ENCODE measurements at regions of chr16 and their contacts with region 1.

Region 1: GRCh38 chr16:21708533-21709115 is 44.9 kb downstream of the OTOA start:
- DNase-seq: peak in 1 of 2 experiments; percentile 90
- H3K4me3 ChIP-seq: no peak overlapping the region
- H3K27ac ChIP-seq: no peak overlapping the region
- H3K4me1 ChIP-seq: no peaks in the 10 kb centered on the region
- H3K27me3 ChIP-seq: no peaks in the 10 kb centered on the region
- CTCF ChIP-seq: peak in 2 of 3 experiments; percentile 79 to 80; a peak in 3 of 4 replicates
- EP300 ChIP-seq: no peak
- POLR2A ChIP-seq: no peak
- RAD21 ChIP-seq: peak; percentile 86 to 88

Region 2: DNA sequence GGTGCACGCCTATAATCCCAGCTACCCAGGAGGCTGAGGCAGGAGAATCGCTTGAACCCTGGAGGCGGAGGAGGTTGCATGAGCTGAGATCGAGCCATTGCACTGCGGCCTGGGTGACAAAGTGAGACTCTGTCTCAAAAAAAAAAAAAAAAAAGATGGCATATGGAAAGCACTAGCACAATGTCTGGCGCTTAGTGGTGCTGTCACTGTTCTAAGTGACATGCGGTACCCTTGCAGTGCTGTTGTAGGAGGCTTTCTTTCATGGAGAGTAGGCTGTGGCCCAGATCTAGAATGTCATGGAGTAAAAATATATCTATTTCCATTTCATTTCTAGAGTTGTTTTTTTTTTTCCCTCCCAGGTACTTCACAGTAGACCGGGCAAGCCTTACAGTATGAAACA is 123.8 kb before region 1 on chr16:
- CTCF ChIA-PET with region 1: interaction called, 14 read pairs
- POLR2A ChIA-PET with region 1: no interaction called
- DNase-seq: no peak
- H3K4me3 ChIP-seq: no peak overlapping the region
- H3K27ac ChIP-seq: no peak overlapping the region
- H3K4me1 ChIP-seq: no peaks in the 10 kb centered on the region
- H3K27me3 ChIP-seq: no peaks in the 10 kb centered on the region
- CTCF ChIP-seq: no peak
- EP300 ChIP-seq: no peak
- POLR2A ChIP-seq: no peak
- RAD21 ChIP-seq: no peak

Region 3: GRCh38 chr16:21656795-21657768 is 51.5 kb before region 1 on chr16:
- CTCF ChIA-PET with region 1: interaction called, 67 read pairs
- POLR2A ChIA-PET with region 1: no interaction called
- DNase-seq: no peak
- H3K4me3 ChIP-seq: no peak overlapping the region
- H3K27ac ChIP-seq: no peak overlapping the region
- H3K4me1 ChIP-seq: no peaks in the 10 kb centered on the region
- H3K27me3 ChIP-seq: no peaks in the 10 kb centered on the region
- CTCF ChIP-seq: peak in 2 of 3 experiments; percentile 71 to 74; a peak in 3 of 4 replicates
- EP300 ChIP-seq: no peak
- POLR2A ChIP-seq: no peak
- RAD21 ChIP-seq: peak; percentile 80 to 82

Region 4: GRCh38 chr16:21684199-21684598 is 24.4 kb before region 1 on chr16:
- CTCF ChIA-PET with region 1: interaction called, 16 read pairs
- POLR2A ChIA-PET with region 1: interaction called, 4 read pairs
- DNase-seq: peak in 1 of 2 experiments; percentile 82
- H3K4me3 ChIP-seq: no peak overlapping the region
- H3K27ac ChIP-seq: no peak overlapping the region
- H3K4me1 ChIP-seq: no peaks in the 10 kb centered on the region
- H3K27me3 ChIP-seq: no peaks in the 10 kb centered on the region
- CTCF ChIP-seq: peak; percentile 72 to 85 (median 75)
- EP300 ChIP-seq: no peak
- POLR2A ChIP-seq: no peak
- RAD21 ChIP-seq: peak; percentile 33 to 59; a peak in 3 of 4 replicates

Region 5: DNA sequence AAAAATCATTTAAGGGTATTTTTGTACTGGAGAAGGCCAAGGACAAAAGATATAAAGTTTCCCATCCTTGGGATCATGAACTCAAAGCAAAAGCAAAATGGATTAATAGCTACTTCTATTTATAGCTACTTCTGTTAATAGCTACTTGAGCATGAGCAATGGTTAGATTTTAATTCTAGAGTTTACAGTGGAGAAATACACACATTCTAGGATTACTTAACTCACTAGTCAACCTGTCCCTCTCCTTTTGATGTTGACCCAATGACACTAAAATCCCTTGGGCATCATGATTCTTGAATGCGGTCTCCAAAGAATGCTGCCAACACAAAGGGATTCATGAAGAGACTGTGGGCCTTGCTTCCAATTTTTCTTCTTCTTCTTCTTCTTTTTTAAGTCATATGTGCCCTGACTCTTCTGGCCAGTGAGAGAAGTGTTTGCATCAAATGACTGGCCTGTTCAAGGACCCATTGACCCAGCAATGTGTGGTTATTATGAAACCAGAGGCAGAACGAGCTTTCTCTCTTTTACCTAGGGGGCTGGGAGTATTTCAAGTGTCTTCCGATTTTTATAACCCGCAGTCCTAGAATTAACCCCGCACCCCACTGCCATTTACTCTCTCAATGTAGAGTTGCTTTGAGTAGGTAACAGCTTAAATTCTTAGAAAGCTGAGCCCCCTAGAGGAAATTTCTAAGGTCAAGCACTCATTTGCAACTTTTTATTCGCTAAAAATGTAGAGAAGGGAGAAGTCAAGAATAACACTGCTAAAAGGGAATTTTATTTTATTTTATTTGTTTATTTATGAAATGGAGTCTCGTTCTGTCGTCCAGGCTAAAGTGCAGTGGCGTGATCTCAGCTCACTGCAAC is 10.2 kb before region 1 on chr16:
- CTCF ChIA-PET with region 1: interaction called, 14 read pairs
- POLR2A ChIA-PET with region 1: no interaction called
- DNase-seq: no peak
- H3K4me3 ChIP-seq: no peak overlapping the region
- H3K27ac ChIP-seq: no peak overlapping the region
- H3K4me1 ChIP-seq: peaks cover 0 to 2% (median 1%) of the 10 kb centered on the region in 4 experiments; a peak in 2 of 7 replicates
- H3K27me3 ChIP-seq: no peaks in the 10 kb centered on the region
- CTCF ChIP-seq: peak in 1 of 3 experiments; percentile 7; a peak in 2 of 4 replicates
- EP300 ChIP-seq: no peak
- POLR2A ChIP-seq: no peak
- RAD21 ChIP-seq: peak; percentile 10 to 19; a peak in 2 of 4 replicates

Region 6: DNA sequence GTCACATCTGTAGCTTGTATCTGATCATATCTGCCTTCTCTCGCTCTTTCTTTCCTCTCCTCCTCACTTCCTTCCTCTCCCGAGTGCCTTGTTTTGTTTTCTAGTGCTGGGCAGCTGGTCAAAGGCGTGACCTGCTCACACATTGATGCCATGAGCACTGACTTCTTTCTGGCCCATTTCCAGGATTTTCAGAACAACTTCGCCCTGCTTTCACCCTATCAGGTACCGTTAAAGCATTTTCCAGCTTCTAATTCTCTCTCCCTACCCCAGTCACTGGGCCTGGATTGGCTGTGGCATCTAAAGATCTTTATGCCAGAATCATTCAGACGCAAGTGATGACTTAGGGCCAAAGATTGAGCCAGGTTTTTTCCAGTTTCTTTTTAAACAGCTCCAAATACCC is 10.7 kb after region 1 on chr16:
- CTCF ChIA-PET with region 1: interaction called, 24 read pairs
- POLR2A ChIA-PET with region 1: no interaction called
- DNase-seq: no peak
- H3K4me3 ChIP-seq: no peak overlapping the region
- H3K27ac ChIP-seq: no peak overlapping the region
- H3K4me1 ChIP-seq: no peaks in the 10 kb centered on the region
- H3K27me3 ChIP-seq: no peaks in the 10 kb centered on the region
- CTCF ChIP-seq: no peak
- EP300 ChIP-seq: no peak
- POLR2A ChIP-seq: no peak
- RAD21 ChIP-seq: no peak

Region 7: GRCh38 chr16:22023505-22023904 is 314.9 kb after region 1 on chr16:
- CTCF ChIA-PET with region 1: no interaction called
- POLR2A ChIA-PET with region 1: no interaction called
- DNase-seq: no peak
- H3K4me3 ChIP-seq: no peak overlapping the region
- H3K27ac ChIP-seq: no peak overlapping the region
- H3K4me1 ChIP-seq: no peaks in the 10 kb centered on the region
- H3K27me3 ChIP-seq: no peaks in the 10 kb centered on the region
- CTCF ChIP-seq: no peak
- EP300 ChIP-seq: no peak
- POLR2A ChIP-seq: no peak
- RAD21 ChIP-seq: no peak